ENCODE measurements at regions of chr9 and their contacts with region 1.

Region 1: DNA sequence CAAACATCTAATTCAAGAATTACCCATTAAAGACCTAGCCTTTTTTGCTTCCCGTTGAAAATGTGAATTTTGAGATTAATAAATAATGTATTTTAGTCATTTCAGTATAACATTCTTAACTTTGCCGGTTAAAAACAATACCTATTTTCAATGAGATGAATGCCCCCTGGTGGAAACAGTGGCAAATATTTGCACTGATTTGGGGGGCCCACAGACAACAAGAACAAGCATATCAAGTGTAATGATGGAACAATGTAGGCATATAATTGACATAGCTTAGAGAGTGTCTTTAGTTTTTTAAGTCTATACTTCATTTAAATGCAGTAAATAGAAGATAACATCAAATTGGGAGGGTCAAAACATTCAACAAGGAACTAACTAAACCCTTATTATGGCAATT is 111.9 kb downstream of the NTRK2 start:
- DNase-seq: no peak
- H3K4me3 Mint-ChIP-seq: no peak overlapping the region
- H3K27ac Mint-ChIP-seq: no peak overlapping the region
- H3K4me1 Mint-ChIP-seq: no peaks in the 10 kb centered on the region
- H3K27me3 Mint-ChIP-seq: no peaks in the 10 kb centered on the region

Region 2: DNA sequence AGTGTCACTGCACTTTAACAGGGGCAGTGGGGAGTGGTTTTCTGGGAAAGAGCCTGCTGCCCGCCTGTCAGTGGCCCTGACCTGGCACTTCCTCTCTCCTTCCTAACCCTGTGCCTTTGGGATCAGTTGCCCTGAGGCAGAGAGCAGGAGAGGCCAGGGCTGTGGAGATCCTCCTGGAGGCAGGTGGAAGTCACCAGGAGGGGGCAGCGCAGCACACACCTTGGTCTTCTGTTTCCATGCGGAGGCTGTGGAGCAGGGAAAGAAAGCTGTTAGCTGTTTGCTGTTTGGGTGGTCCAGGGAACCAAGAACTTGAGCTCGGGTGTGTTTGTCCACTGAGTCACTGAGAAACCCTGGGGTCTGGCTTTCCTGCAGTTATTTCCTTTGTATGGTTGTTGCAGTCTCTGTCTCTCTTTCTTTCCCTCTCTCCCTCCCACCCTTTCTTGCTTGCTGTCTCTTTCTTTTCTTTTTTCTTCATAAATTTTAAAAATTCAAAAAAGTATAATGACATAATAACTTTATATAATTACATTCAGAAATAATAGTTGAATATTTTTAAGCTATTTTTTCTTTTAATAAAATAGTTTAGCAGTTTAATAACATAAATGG is 83.8 kb before region 1 on chr9:
- CTCF ChIA-PET with region 1: interaction called, 36 read pairs
- DNase-seq: peak; percentile 49
- H3K4me3 Mint-ChIP-seq: no peak overlapping the region
- H3K27ac Mint-ChIP-seq: no peak overlapping the region
- H3K4me1 Mint-ChIP-seq: no peaks in the 10 kb centered on the region
- H3K27me3 Mint-ChIP-seq: peaks cover 4% of the 10 kb centered on the region

Region 3: DNA sequence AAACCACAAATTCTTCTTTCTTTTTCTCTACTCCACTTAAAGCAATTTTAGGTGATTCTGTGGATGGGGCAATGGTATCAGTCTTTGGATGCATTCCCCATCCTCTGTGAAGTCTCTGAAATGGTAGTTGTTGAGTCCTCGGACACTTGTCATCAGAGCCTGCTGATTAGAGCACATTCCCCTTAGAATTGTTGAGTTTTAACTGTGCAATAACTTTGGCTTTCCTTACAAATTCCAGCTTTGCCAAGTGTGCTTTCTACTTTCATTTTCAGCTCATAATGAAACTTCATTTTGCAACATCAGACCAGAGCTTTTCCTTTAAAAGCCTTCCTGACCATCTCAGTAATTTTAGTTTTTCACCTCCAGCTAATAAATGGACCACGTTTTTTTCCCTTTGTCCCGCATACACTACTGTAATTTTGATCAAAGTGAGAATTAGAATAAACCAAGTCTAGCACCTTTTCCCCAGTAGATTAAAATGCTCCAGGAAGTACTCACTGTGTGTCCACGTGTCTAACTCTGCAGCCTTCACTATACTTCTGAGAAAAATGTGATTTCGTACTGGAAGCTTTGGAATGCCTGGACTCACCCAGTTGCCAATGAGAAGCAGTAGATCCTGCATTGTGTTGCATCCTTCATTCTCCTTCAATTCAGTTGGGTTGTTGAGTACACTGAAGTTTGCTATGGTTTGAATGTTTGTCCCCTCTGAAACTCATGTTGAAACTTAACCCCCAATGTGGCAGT is 23.7 kb after region 1 on chr9:
- CTCF ChIA-PET with region 1: no interaction called
- DNase-seq: no peak
- H3K4me3 Mint-ChIP-seq: no peak overlapping the region
- H3K27ac Mint-ChIP-seq: no peak overlapping the region
- H3K4me1 Mint-ChIP-seq: no peaks in the 10 kb centered on the region
- H3K27me3 Mint-ChIP-seq: no peaks in the 10 kb centered on the region

Measured in activated naive CD4-positive, alpha-beta T cell treated with anti-CD3 and anti-CD28 coated beads, Interleukin-2, amount 10 ng/mL, durations not matched to agents 7 days and 5 days (primary cell).